Naive thymus-derived CD4-positive, alpha-beta T cell (primary cell): ENCODE measurements at regions of chr13 and their contacts with region 1.

Region 1: GRCh38 chr13:49540552-49540951 is 44.8 kb downstream of the PHF11 start:
- DNase-seq: peak in 6 of 9 donors; percentile 25 to 46 (median 30)
- ATAC-seq: peak; percentile 44
- H3K4me3 ChIP-seq: peak overlapping the region; percentile 38
- H3K4me3 Mint-ChIP-seq: peak overlapping the region; percentile 79 to 89 (median 83)
- H3K27ac ChIP-seq: peak overlapping the region; percentile 76
- H3K27ac Mint-ChIP-seq: peak overlapping the region; percentile 89 to 99 (median 94)
- H3K4me1 ChIP-seq: peaks cover 0 to 18% of the 10 kb centered on the region in 2 donors
- H3K4me1 Mint-ChIP-seq: peaks cover 5 to 26% (median 23%) of the 10 kb centered on the region in 7 donors
- H3K27me3 ChIP-seq: no peaks in the 10 kb centered on the region
- H3K27me3 Mint-ChIP-seq: no peaks in the 10 kb centered on the region

Region 2: DNA sequence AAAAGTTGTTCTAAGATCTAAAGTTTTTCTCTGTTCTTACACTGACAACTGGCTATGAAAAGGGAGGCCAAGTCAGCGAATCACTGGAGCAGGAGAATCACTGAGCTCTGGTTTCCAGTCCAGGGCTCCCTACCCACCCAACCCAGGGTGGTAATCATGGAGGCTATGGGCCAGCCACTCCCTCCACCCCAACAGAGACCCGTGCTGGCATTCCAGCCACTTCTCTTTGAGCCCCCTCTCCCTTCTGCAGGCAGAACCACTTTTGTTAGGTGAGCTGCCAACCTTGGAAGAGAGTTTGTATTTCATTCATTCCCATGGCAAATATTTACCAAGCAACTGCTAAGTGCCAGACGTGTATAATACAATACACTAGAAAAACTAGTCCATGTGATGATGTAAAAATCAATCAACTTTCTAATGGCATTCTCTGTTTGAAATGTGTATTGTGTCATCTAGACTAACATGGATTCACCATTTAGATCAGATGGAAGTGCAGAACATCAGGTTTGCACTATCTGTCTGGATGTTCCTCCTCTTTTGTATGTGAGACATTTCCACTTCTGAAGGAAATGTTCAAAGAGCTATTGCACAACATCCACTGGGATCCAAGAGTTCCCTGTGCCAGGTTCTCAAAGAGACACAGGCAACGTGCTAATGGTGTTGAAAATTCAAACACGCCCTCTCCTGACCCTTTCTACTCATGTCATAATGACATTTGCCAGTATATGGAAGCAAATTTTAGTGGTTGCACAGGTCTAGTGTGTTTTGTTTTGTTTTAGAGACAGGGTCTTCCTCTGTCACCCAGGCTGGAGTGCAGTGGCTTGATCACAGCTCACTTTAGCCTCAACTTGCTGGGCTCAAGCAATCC is 315.1 kb before region 1 on chr13:
- CTCF ChIA-PET with region 1: no interaction called
- POLR2A ChIA-PET with region 1: no interaction called
- intact Hi-C with region 1: no loop called
- DNase-seq: no peak
- ATAC-seq: no peak
- H3K4me3 ChIP-seq: no peak overlapping the region
- H3K4me3 Mint-ChIP-seq: no peak overlapping the region
- H3K27ac ChIP-seq: no peak overlapping the region
- H3K27ac Mint-ChIP-seq: no peak overlapping the region
- H3K4me1 ChIP-seq: no peaks in the 10 kb centered on the region
- H3K4me1 Mint-ChIP-seq: peaks cover 2 to 9% (median 6%) of the 10 kb centered on the region in 7 donors
- H3K27me3 ChIP-seq: peaks cover 0 to 6% of the 10 kb centered on the region in 2 donors
- H3K27me3 Mint-ChIP-seq: peaks cover 20 to 52% (median 22%) of the 10 kb centered on the region in 5 donors

Region 3: DNA sequence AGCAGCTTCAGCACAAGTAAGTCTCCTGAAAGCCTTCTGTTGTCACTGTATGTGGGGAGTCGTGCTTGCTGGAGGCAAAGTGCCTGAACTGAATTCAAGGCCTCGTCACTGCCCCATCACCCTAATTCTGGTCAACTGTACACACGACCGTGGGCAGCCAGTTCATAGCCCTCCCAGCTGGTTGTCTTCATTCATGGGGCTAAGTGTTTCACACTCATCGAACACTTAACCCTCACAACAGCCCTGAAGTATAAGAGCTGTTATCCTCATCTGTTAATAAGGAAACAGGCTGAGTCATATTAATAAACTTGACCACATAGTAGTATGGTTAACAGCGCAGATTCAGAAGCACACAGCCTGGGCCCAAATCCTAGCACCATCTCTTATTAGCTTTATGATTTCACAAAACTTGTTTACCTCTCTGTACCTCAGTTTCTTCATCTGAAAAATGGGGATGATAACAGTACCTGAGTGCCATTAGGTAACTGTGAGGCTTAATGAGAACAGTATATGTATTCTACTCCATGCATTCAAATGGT is 226.1 kb before region 1 on chr13:
- CTCF ChIA-PET with region 1: no interaction called
- POLR2A ChIA-PET with region 1: no interaction called
- intact Hi-C with region 1: no loop called
- DNase-seq: no peak
- ATAC-seq: no peak
- H3K4me3 ChIP-seq: no peak overlapping the region
- H3K4me3 Mint-ChIP-seq: no peak overlapping the region
- H3K27ac ChIP-seq: no peak overlapping the region
- H3K27ac Mint-ChIP-seq: no peak overlapping the region
- H3K4me1 ChIP-seq: no peaks in the 10 kb centered on the region
- H3K4me1 Mint-ChIP-seq: peaks cover 0 to 6% (median 0%) of the 10 kb centered on the region in 7 donors
- H3K27me3 ChIP-seq: no peaks in the 10 kb centered on the region
- H3K27me3 Mint-ChIP-seq: no peaks in the 10 kb centered on the region

Region 4: DNA sequence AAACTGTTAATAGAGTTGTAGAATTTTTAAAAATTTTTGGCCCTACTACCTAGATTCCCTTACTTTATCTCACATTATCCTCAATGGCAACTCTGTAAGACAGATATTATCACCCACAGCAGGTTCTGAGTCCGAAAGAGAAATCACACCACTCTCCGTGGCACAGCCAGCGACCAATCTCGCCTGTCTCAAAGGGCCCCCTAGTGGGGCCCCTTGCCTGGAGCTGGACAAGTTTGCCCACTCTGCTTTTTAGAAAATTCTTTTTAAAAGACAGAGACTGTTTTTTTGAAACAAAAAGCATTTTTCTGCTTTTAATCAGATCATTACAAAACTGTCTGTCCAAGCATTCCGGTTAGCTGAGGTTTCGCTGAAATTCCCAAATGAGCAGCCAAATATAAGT is 23.1 kb before region 1 on chr13:
- CTCF ChIA-PET with region 1: no interaction called
- POLR2A ChIA-PET with region 1: no interaction called
- intact Hi-C with region 1: no loop called
- DNase-seq: no peak
- ATAC-seq: no peak
- H3K4me3 ChIP-seq: no peak overlapping the region
- H3K4me3 Mint-ChIP-seq: no peak overlapping the region
- H3K27ac ChIP-seq: no peak overlapping the region
- H3K27ac Mint-ChIP-seq: peak overlapping the region in 3 of 9 donors; percentile 10 to 65 (median 52)
- H3K4me1 ChIP-seq: no peaks in the 10 kb centered on the region
- H3K4me1 Mint-ChIP-seq: peaks cover 6 to 18% (median 13%) of the 10 kb centered on the region in 7 donors
- H3K27me3 ChIP-seq: no peaks in the 10 kb centered on the region
- H3K27me3 Mint-ChIP-seq: no peaks in the 10 kb centered on the region

Region 5: DNA sequence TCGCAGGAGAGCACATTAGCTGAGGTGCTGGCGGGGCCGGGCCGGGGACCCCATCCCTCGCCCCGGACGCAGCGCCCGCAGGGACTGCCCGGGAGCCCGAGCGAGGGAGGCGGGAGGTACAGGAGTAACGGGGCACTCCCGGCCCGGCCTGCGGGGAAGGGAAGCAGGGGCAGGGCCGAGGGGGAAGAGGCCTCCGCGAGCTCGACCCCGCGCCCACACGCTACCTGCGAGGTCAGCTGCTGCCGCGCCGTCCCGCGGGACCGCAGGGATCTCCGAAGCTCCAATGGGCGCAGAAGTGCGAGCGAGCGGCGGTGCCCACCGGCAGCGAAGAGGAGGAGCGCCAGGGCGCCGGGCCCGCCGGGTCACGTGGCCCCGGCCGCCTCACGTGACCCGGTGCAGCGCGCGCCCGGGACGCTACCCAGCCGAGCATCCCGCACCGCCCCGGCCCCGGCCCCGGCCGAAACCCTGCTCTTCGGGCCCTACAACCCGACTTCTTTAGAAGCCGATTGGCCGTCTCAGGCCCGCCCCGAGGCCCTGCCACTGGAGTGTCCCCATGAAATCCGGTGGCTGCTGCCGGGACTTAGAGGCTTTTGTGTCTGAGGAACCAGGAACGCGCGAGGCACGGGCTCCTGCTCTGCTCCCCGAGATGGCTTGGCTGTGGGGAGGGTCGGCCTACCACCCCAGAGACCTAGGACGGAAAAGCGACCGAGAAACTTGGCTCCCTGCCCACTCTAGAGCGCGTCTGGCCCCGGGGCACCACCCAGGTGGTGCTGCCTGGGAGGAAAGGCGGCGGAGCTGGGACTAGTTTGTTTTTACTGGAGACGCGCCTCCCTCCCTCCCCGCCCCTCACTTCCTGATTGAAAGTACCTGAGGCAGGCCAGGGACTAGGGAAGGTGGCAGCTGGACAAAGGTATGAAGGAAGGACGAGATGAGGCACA is 44.9 kb after region 1 on chr13 and contains the start of gene RCBTB1:
- CTCF ChIA-PET with region 1: no interaction called
- POLR2A ChIA-PET with region 1: interaction called, 11 read pairs
- intact Hi-C with region 1: loop called (anchors 2 kb)
- DNase-seq: peak; percentile 47 to 74 (median 66)
- ATAC-seq: peak; percentile 97
- H3K4me3 ChIP-seq: peak within 1 kb of the TSS; percentile 56
- H3K4me3 Mint-ChIP-seq: peak within 1 kb of the TSS; percentile 83 to 100 (median 92)
- H3K27ac ChIP-seq: peak within 1 kb of the TSS; percentile 82
- H3K27ac Mint-ChIP-seq: peak within 1 kb of the TSS; percentile 86 to 96 (median 94)
- H3K4me1 ChIP-seq: peaks cover 10 to 16% of the 10 kb centered on the region in 2 donors
- H3K4me1 Mint-ChIP-seq: peaks cover 32 to 53% (median 50%) of the 10 kb centered on the region in 7 donors
- H3K27me3 ChIP-seq: no peaks in the 10 kb centered on the region
- H3K27me3 Mint-ChIP-seq: peaks cover 0 to 3% (median 0%) of the 10 kb centered on the region in 5 donors
- total RNA-seq, gene RCBTB1: 16.3 to 22.2 (median 20.4) TPM

Region 6: GRCh38 chr13:50594276-50595051 is 1053.9 kb after region 1 on chr13:
- CTCF ChIA-PET with region 1: no interaction called
- POLR2A ChIA-PET with region 1: no interaction called
- intact Hi-C with region 1: no loop called
- DNase-seq: peak in 2 of 9 donors; percentile 13 to 40
- ATAC-seq: peak; percentile 38
- H3K4me3 ChIP-seq: no peak overlapping the region
- H3K4me3 Mint-ChIP-seq: peak overlapping the region; percentile 13 to 73 (median 61)
- H3K27ac ChIP-seq: no peak overlapping the region
- H3K27ac Mint-ChIP-seq: peak overlapping the region; percentile 49 to 90 (median 77)
- H3K4me1 ChIP-seq: peaks cover 0 to 13% of the 10 kb centered on the region in 2 donors
- H3K4me1 Mint-ChIP-seq: peaks cover 12 to 43% (median 32%) of the 10 kb centered on the region in 7 donors
- H3K27me3 ChIP-seq: no peaks in the 10 kb centered on the region
- H3K27me3 Mint-ChIP-seq: peaks cover 0 to 7% (median 3%) of the 10 kb centered on the region in 5 donors